ENCODE measurements at regions of chr9 and their contacts with region 1.

Region 1: GRCh38 chr9:87684627-87685219 is 41.2 kb upstream of the CTSL start:
- DNase-seq: peak in 1 of 2 donors; percentile 64
- H3K4me3 ChIP-seq: no peak overlapping the region
- H3K27ac ChIP-seq: no peak overlapping the region
- H3K4me1 ChIP-seq: no peaks in the 10 kb centered on the region
- H3K27me3 ChIP-seq: no peaks in the 10 kb centered on the region
- CTCF ChIP-seq: peak in 2 of 3 experiments; percentile 54 to 62

Region 2: DNA sequence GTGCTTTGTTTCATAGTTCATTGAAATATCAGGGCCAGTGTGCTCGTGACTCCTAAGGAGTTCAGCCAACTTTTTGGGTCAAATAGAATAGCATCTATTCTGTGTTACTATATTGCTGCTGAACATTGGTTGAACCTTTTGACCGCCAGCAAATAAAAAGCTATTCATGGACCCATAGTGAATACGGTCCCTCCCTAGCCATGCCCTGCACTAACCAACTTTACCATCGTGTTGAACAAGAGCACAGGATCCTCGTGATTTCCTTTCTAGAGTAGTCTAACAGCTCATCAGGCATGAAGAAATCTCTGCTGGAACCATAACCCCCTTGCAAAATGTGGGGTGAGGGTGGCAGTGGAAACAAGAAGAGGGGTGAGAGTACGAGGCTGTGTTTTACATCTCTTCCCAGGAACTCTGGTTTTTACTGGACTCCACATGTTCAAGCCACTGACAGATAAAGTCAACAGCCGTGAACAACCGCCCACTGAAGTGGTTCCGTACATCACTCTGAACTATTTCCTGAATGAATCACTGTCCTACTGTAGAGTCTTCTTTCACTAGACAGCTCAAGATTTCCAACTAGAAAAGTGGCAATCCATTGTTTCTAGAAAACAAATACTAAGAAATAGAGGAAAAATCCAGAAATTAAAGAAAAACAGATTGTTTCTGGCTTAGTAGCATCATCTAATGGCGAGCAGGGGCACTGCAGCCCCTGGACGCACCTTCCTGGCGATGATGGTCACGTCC is 127.8 kb after region 1 on chr9:
- intact Hi-C with region 1: loop called (anchors 1 kb)
- DNase-seq: no peak
- H3K4me3 ChIP-seq: no peak overlapping the region
- H3K27ac ChIP-seq: no peak overlapping the region
- H3K4me1 ChIP-seq: no peaks in the 10 kb centered on the region
- H3K27me3 ChIP-seq: no peaks in the 10 kb centered on the region
- CTCF ChIP-seq: peak; percentile 42 to 72 (median 57)

Measured in ascending aorta (tissue), 2 donors.